CD14-positive monocyte (primary cell): ENCODE measurements at regions of chr2 and their contacts with region 1.

Region 1: GRCh38 chr2:240513549-240514287 is 44.1 kb downstream of the ANKMY1 start:
- DNase-seq: peak; percentile 94 to 98 (median 96)
- H3K4me3 ChIP-seq: peak overlapping the region in 1 of 3 experiments; percentile 45
- H3K4me3 Mint-ChIP-seq: peak overlapping the region; percentile 4 to 80
- H3K27ac ChIP-seq: peak overlapping the region; percentile 55 to 93
- H3K27ac Mint-ChIP-seq: peak overlapping the region; percentile 90 to 99 (median 97)
- H3K4me1 ChIP-seq: peaks cover 13 to 15% of the 10 kb centered on the region in 2 donors
- H3K4me1 Mint-ChIP-seq: peaks cover 17% of the 10 kb centered on the region
- H3K27me3 ChIP-seq: no peaks in the 10 kb centered on the region
- H3K27me3 Mint-ChIP-seq: no peaks in the 10 kb centered on the region
- CTCF ChIP-seq: peak; percentile 95

Region 2: GRCh38 chr2:240434728-240435456 is 78.8 kb before region 1 on chr2:
- intact Hi-C with region 1: no loop called
- DNase-seq: peak; percentile 10 to 24 (median 14)
- H3K4me3 ChIP-seq: peak overlapping the region in 1 of 3 experiments; percentile 60
- H3K4me3 Mint-ChIP-seq: peak overlapping the region; percentile 75 to 87
- H3K27ac ChIP-seq: no peak overlapping the region
- H3K27ac Mint-ChIP-seq: peak overlapping the region in 1 of 7 donors; percentile 46
- H3K4me1 ChIP-seq: peaks cover 0 to 17% of the 10 kb centered on the region in 2 donors
- H3K4me1 Mint-ChIP-seq: peaks cover 7% of the 10 kb centered on the region
- H3K27me3 ChIP-seq: peaks cover 19 to 39% of the 10 kb centered on the region in 2 donors
- H3K27me3 Mint-ChIP-seq: peaks cover 34 to 65% (median 49%) of the 10 kb centered on the region in 3 donors
- CTCF ChIP-seq: no peak

Region 3: DNA sequence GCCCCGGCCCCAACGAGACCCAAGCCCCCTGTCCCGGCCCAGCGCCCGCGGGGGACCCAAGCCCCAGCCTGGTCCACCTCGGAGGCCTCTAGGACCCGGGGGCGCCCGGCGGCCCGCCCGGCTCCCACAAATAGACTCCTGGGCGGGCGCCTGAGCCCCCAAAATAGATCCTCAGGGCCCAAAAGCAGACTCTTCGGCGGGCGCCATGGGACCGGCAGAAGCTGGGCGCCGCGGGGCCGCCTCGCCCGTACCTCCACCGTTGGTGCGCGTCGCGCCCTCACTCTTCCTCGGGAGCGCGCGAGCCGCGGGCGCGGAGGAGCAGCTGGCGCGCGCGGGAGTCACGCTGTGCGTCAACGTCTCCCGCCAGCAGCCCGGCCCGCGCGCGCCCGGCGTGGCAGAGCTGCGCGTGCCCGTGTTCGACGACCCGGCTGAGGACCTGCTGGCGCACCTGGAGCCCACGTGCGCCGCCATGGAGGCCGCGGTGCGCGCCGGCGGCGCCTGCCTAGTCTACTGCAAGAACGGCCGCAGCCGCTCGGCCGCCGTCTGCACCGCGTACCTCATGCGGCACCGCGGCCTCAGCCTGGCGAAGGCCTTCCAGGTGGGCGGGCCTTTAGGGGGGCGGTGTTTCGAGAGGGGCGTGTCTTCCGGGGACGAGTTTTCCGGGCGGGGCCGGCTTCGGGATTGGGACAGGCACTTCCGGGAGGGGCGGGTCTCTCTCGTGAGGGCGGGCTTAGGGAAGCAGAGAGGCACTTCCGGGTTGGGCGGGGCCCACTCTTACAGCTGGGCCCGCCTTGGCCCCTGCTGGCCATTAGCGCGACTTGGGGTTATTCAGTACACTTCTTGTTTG is 47.0 kb after region 1 on chr2:
- intact Hi-C with region 1: loop called (anchors 2 to 5 kb)
- DNase-seq: peak; percentile 97 to 99 (median 99)
- H3K4me3 ChIP-seq: peak overlapping the region; percentile 66 to 80 (median 79)
- H3K4me3 Mint-ChIP-seq: peak overlapping the region; percentile 84 to 92
- H3K27ac ChIP-seq: peak overlapping the region; percentile 97 to 98
- H3K27ac Mint-ChIP-seq: peak overlapping the region; percentile 93 to 100 (median 97)
- H3K4me1 ChIP-seq: peaks cover 76 to 91% of the 10 kb centered on the region in 2 donors
- H3K4me1 Mint-ChIP-seq: peaks cover 73% of the 10 kb centered on the region
- H3K27me3 ChIP-seq: no peaks in the 10 kb centered on the region
- H3K27me3 Mint-ChIP-seq: peaks cover 0 to 7% (median 6%) of the 10 kb centered on the region in 3 donors
- CTCF ChIP-seq: peak; percentile 30

Region 4: DNA sequence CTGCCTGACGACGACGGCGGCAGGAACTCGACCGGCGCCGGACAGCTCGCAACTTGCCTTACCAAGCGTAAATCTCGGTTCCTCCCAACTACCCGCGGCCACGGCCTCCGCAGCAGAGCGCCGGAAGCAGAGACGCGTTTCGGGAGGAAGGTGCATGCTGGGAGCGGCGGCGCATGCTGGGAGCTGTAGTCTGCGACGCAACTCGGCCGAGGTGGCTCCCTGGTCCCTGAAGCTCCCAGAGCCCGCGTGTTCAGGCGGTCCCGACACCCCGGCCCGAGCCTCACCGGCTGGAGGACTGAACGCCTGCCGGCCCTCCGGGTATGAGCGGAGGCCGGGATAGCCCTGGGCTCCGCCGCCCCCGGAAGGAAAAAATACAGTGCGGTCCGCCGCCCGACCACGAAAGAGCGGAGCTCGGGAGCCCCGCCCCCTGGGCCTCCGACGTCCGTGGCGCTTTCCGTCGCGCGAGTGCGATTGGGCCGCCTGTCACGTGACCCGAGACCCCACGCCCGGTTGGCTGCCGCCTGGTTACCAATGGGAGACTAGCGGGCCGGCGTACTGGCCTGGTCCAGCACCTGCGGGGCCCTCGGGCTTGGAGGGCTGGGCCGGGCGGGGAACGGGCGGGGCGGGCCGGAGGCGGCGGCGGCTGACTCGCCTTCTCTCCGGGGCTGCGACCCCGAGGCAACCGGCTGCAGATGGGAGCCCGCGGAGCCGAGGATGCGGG is 72.6 kb after region 1 on chr2 and contains the start of gene CAPN10:
- intact Hi-C with region 1: loop called in 1 of 2 experiments (anchors 10 kb)
- DNase-seq: peak; percentile 94 to 97 (median 94)
- H3K4me3 ChIP-seq: peak within 1 kb of the TSS; percentile 46 to 83 (median 80)
- H3K4me3 Mint-ChIP-seq: peak within 1 kb of the TSS; percentile 92 to 93
- H3K27ac ChIP-seq: peak within 1 kb of the TSS; percentile 93 to 94
- H3K27ac Mint-ChIP-seq: peak within 1 kb of the TSS; percentile 95 to 99 (median 98)
- H3K4me1 ChIP-seq: peaks cover 35 to 45% of the 10 kb centered on the region in 2 donors
- H3K4me1 Mint-ChIP-seq: peaks cover 59% of the 10 kb centered on the region
- H3K27me3 ChIP-seq: no peaks in the 10 kb centered on the region
- H3K27me3 Mint-ChIP-seq: peaks cover 0 to 3% (median 2%) of the 10 kb centered on the region in 3 donors
- CTCF ChIP-seq: no peak
- polyA plus RNA-seq, gene CAPN10: 7.3 to 57.0 (median 7.4) TPM

Region 5: GRCh38 chr2:240704651-240705050 is 190.9 kb after region 1 on chr2:
- intact Hi-C with region 1: loop called (anchors 5 kb)
- DNase-seq: no peak
- H3K4me3 ChIP-seq: no peak overlapping the region
- H3K4me3 Mint-ChIP-seq: no peak overlapping the region
- H3K27ac ChIP-seq: no peak overlapping the region
- H3K27ac Mint-ChIP-seq: no peak overlapping the region
- H3K4me1 ChIP-seq: peaks cover 14 to 17% of the 10 kb centered on the region in 2 donors
- H3K4me1 Mint-ChIP-seq: peaks cover 21% of the 10 kb centered on the region
- H3K27me3 ChIP-seq: no peaks in the 10 kb centered on the region
- H3K27me3 Mint-ChIP-seq: peaks cover 4 to 7% (median 7%) of the 10 kb centered on the region in 3 donors
- CTCF ChIP-seq: no peak

Region 6: GRCh38 chr2:240733803-240734495 is 220.2 kb after region 1 on chr2:
- intact Hi-C with region 1: loop called in 1 of 2 experiments (anchors 10 kb)
- DNase-seq: peak in 1 of 3 donors; percentile 9
- H3K4me3 ChIP-seq: no peak overlapping the region
- H3K4me3 Mint-ChIP-seq: no peak overlapping the region
- H3K27ac ChIP-seq: no peak overlapping the region
- H3K27ac Mint-ChIP-seq: no peak overlapping the region
- H3K4me1 ChIP-seq: no peaks in the 10 kb centered on the region
- H3K4me1 Mint-ChIP-seq: no peaks in the 10 kb centered on the region
- H3K27me3 ChIP-seq: no peaks in the 10 kb centered on the region
- H3K27me3 Mint-ChIP-seq: peaks cover 2 to 14% (median 9%) of the 10 kb centered on the region in 3 donors
- CTCF ChIP-seq: peak; percentile 35

Region 7: DNA sequence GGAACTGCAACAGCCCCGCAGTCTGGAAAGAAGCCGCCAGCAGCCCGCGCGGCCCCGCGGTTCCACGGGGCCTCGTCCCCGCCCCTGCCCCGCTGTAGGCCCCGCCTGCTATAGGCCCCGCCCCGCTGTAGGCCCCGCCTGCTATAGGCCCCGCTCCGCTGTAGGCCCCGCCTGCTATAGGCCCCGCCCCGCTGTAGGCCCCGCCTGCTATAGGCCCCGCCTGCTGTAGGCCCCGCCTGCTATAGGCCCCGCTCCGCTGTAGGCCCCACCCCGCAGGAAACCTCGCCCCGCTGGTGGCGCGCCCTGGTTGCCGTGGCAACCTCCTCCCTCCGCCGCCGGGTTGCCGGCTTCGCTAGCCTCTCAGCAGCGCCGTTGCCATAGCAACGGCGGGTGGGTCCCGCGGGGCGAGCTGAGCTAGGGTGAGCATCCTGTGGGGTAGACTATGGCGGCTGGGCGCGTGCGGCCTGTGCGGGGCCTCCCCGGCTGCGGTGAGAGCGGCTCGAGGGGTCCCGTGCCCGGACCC is 318.5 kb after region 1 on chr2:
- intact Hi-C with region 1: loop called in 1 of 2 experiments (anchors 10 kb)
- DNase-seq: peak; percentile 80 to 86 (median 81)
- H3K4me3 ChIP-seq: peak overlapping the region in 1 of 3 experiments; percentile 54
- H3K4me3 Mint-ChIP-seq: peak overlapping the region in 1 of 2 donors; percentile 83
- H3K27ac ChIP-seq: no peak overlapping the region
- H3K27ac Mint-ChIP-seq: no peak overlapping the region
- H3K4me1 ChIP-seq: peaks cover 7 to 14% of the 10 kb centered on the region in 2 donors
- H3K4me1 Mint-ChIP-seq: peaks cover 6% of the 10 kb centered on the region
- H3K27me3 ChIP-seq: peaks cover 12 to 44% of the 10 kb centered on the region in 2 donors
- H3K27me3 Mint-ChIP-seq: peaks cover 31 to 56% (median 37%) of the 10 kb centered on the region in 3 donors
- CTCF ChIP-seq: no peak